Endothelial cell of umbilical vein (primary cell): ENCODE measurements at regions of chr11 and their contacts with region 1.

Region 1: GRCh38 chr11:5600374-5600851 is 4.0 kb downstream of the TRIM6 start:
- DNase-seq: peak; percentile 91
- H3K4me3 ChIP-seq: no peak overlapping the region
- H3K27ac ChIP-seq: peak overlapping the region; percentile 32
- H3K4me1 ChIP-seq: peaks cover 9% of the 10 kb centered on the region
- H3K27me3 ChIP-seq: no peaks in the 10 kb centered on the region
- CTCF ChIP-seq: peak; percentile 79 to 94
- POLR2A ChIP-seq: no peak

Region 2: GRCh38 chr11:5420993-5421392 is 179.4 kb before region 1 on chr11:
- CTCF ChIA-PET with region 1: no interaction called
- POLR2A ChIA-PET with region 1: no interaction called
- dilution Hi-C with region 1: no loop called
- intact Hi-C with region 1: no loop called
- DNase-seq: no peak
- H3K4me3 ChIP-seq: no peak overlapping the region
- H3K27ac ChIP-seq: no peak overlapping the region
- H3K4me1 ChIP-seq: no peaks in the 10 kb centered on the region
- H3K27me3 ChIP-seq: no peaks in the 10 kb centered on the region
- CTCF ChIP-seq: no peak
- POLR2A ChIP-seq: no peak

Region 3: GRCh38 chr11:5547982-5548381 is 52.4 kb before region 1 on chr11:
- CTCF ChIA-PET with region 1: no interaction called
- POLR2A ChIA-PET with region 1: no interaction called
- dilution Hi-C with region 1: no loop called
- intact Hi-C with region 1: no loop called
- DNase-seq: no peak
- H3K4me3 ChIP-seq: no peak overlapping the region
- H3K27ac ChIP-seq: no peak overlapping the region
- H3K4me1 ChIP-seq: no peaks in the 10 kb centered on the region
- H3K27me3 ChIP-seq: no peaks in the 10 kb centered on the region
- CTCF ChIP-seq: no peak
- POLR2A ChIP-seq: no peak

Region 4: DNA sequence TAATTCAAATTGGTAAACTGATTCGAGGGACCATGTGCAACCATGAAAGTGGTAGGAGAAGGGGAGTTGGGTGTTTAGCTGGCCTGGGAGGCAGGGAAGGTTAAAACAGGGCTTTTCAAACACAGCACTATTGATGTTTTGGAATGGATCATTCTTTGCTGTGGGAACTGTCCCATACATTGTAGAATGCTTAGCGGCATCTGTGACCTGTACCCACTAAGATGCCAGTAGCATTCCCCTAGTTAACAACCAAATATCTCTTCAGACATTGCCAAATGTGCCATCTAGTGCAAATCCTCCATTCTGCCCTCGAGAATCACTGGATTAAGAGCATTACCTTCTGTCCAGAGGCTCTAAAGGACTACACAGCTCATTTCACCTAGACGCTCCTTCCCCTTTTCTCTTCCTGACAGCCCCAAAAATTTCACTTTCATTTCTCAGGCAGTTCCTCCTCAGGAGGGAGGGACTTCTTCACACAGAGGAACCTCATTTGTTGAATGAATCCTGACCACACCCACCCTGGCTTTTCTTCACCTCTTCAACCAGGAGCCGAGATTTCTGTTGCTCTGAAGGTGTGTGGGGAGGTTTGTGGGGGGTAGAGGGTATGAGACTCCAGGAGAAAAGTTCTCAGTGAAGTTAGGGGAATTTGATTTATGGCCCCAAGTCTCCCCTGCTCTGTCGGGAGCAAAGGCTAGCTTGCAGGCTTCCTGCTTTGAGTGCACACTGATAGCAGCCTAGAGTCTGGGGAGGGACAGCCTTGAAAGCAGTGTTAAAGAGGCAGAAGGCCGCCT is 24.3 kb after region 1 on chr11 and contains the start of gene TRIM34:
- CTCF ChIA-PET with region 1: interaction called, 20 read pairs
- POLR2A ChIA-PET with region 1: no interaction called
- dilution Hi-C with region 1: no loop called
- intact Hi-C with region 1: loop called (anchors 1 kb)
- DNase-seq: peak; percentile 95
- H3K4me3 ChIP-seq: peak within 1 kb of the TSS; percentile 40 to 90 (median 67)
- H3K27ac ChIP-seq: peak within 1 kb of the TSS; percentile 76
- H3K4me1 ChIP-seq: peaks cover 22% of the 10 kb centered on the region
- H3K27me3 ChIP-seq: no peaks in the 10 kb centered on the region
- CTCF ChIP-seq: no peak
- POLR2A ChIP-seq: peak; percentile 62
- total RNA-seq, gene TRIM34: 5.2 and 6.7 TPM in 2 replicates

Region 5: DNA sequence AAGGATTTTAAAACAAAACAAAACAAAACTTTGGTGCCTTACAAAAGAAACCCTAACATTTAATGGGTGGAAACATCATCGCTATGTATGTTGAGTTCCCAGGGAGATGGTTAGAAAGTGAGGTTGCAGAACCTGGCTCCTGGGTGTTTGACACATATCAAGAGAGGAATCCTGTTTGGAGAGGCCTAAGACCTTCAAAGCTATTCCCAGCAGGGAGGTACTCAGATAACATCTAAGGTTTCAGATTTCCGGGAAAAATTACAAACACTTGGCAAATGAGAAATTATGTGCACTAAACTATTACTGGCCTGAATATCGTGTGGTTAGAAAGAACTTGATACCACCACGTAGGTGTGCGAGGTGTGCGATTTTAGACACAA is 66.0 kb after region 1 on chr11:
- CTCF ChIA-PET with region 1: interaction called, 4 read pairs
- POLR2A ChIA-PET with region 1: no interaction called
- dilution Hi-C with region 1: no loop called
- intact Hi-C with region 1: loop called (anchors 2 kb)
- DNase-seq: no peak
- H3K4me3 ChIP-seq: no peak overlapping the region
- H3K27ac ChIP-seq: no peak overlapping the region
- H3K4me1 ChIP-seq: no peaks in the 10 kb centered on the region
- H3K27me3 ChIP-seq: no peaks in the 10 kb centered on the region
- CTCF ChIP-seq: no peak
- POLR2A ChIP-seq: no peak

Region 6: DNA sequence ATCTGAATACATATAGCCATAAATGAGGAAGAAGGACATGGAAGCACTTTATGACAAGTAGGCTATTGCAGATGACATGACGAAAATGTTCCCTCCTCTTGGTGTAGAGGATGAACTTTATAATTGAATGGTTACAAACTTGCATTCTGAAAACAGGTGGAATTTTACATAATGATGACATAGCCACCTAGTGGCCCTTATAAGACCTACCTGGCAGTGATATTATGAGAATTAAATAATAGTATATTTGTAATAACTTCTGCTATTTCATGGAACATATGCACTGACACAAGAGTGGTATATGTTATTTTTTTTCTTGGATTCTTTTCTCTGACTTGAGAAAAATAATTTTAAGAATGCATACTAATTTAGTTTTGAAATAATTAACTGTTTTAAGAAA is 112.1 kb after region 1 on chr11:
- CTCF ChIA-PET with region 1: interaction called, 12 read pairs
- POLR2A ChIA-PET with region 1: no interaction called
- dilution Hi-C with region 1: no loop called
- intact Hi-C with region 1: loop called (anchors 1 kb)
- DNase-seq: peak; percentile 28
- H3K4me3 ChIP-seq: no peak overlapping the region
- H3K27ac ChIP-seq: no peak overlapping the region
- H3K4me1 ChIP-seq: no peaks in the 10 kb centered on the region
- H3K27me3 ChIP-seq: no peaks in the 10 kb centered on the region
- CTCF ChIP-seq: peak; percentile 23 to 27
- POLR2A ChIP-seq: no peak